ENCODE measurements at regions of chr3 and their contacts with region 1.

Region 1: GRCh38 chr3:12868039-12869034 is 27.0 kb upstream of the RPL32 start:
- DNase-seq: peak; percentile 87 to 94 (median 90)
- H3K4me3 ChIP-seq: no peak overlapping the region
- H3K27ac ChIP-seq: no peak overlapping the region
- H3K4me1 ChIP-seq: no peaks in the 10 kb centered on the region
- H3K27me3 ChIP-seq: no peaks in the 10 kb centered on the region
- CTCF ChIP-seq: peak; percentile 95

Region 2: GRCh38 chr3:12553921-12554391 is 314.4 kb before region 1 on chr3:
- intact Hi-C with region 1: no loop called
- DNase-seq: peak in 4 of 5 donors; percentile 37 to 70 (median 66)
- H3K4me3 ChIP-seq: peak overlapping the region; percentile 69 to 80 (median 72)
- H3K27ac ChIP-seq: no peak overlapping the region
- H3K4me1 ChIP-seq: peaks cover 0 to 8% (median 7%) of the 10 kb centered on the region in 3 donors
- H3K27me3 ChIP-seq: no peaks in the 10 kb centered on the region
- CTCF ChIP-seq: no peak

Region 3: GRCh38 chr3:12613250-12613649 is 255.1 kb before region 1 on chr3:
- intact Hi-C with region 1: no loop called
- DNase-seq: no peak
- H3K4me3 ChIP-seq: no peak overlapping the region
- H3K27ac ChIP-seq: no peak overlapping the region
- H3K4me1 ChIP-seq: no peaks in the 10 kb centered on the region
- H3K27me3 ChIP-seq: no peaks in the 10 kb centered on the region
- CTCF ChIP-seq: no peak

Region 4: GRCh38 chr3:12719984-12720898 is 148.1 kb before region 1 on chr3:
- intact Hi-C with region 1: no loop called
- DNase-seq: peak; percentile 79 to 98 (median 90)
- H3K4me3 ChIP-seq: peak overlapping the region; percentile 2 to 32 (median 11)
- H3K27ac ChIP-seq: no peak overlapping the region
- H3K4me1 ChIP-seq: peaks cover 0 to 5% (median 4%) of the 10 kb centered on the region in 3 donors
- H3K27me3 ChIP-seq: no peaks in the 10 kb centered on the region
- CTCF ChIP-seq: peak; percentile 96

Region 5: GRCh38 chr3:12984023-12984823 is 115.9 kb after region 1 on chr3:
- intact Hi-C with region 1: loop called (anchors 10 kb)
- DNase-seq: peak in 4 of 5 donors; percentile 77 to 86 (median 79)
- H3K4me3 ChIP-seq: no peak overlapping the region
- H3K27ac ChIP-seq: no peak overlapping the region
- H3K4me1 ChIP-seq: peaks cover 0 to 5% (median 3%) of the 10 kb centered on the region in 3 donors
- H3K27me3 ChIP-seq: no peaks in the 10 kb centered on the region
- CTCF ChIP-seq: peak; percentile 76

Region 6: GRCh38 chr3:13186435-13186815 is 318.1 kb after region 1 on chr3:
- intact Hi-C with region 1: no loop called
- DNase-seq: peak in 1 of 5 donors; percentile 36
- H3K4me3 ChIP-seq: no peak overlapping the region
- H3K27ac ChIP-seq: no peak overlapping the region
- H3K4me1 ChIP-seq: no peaks in the 10 kb centered on the region
- H3K27me3 ChIP-seq: no peaks in the 10 kb centered on the region
- CTCF ChIP-seq: no peak